Activated naive CD4-positive, alpha-beta T cell treated with anti-CD3 and anti-CD28 coated beads for 36 hours (primary cell): ENCODE measurements at regions of chr9 and their contacts with region 1.

Region 1: GRCh38 chr9:91101611-91102168 is 260.0 kb downstream of the AUH start:
- DNase-seq: peak; percentile 97
- H3K4me3 Mint-ChIP-seq: peak overlapping the region; percentile 59
- H3K27ac Mint-ChIP-seq: peak overlapping the region; percentile 14
- H3K4me1 Mint-ChIP-seq: peaks cover 41% of the 10 kb centered on the region
- H3K27me3 Mint-ChIP-seq: peaks cover 3% of the 10 kb centered on the region

Region 2: DNA sequence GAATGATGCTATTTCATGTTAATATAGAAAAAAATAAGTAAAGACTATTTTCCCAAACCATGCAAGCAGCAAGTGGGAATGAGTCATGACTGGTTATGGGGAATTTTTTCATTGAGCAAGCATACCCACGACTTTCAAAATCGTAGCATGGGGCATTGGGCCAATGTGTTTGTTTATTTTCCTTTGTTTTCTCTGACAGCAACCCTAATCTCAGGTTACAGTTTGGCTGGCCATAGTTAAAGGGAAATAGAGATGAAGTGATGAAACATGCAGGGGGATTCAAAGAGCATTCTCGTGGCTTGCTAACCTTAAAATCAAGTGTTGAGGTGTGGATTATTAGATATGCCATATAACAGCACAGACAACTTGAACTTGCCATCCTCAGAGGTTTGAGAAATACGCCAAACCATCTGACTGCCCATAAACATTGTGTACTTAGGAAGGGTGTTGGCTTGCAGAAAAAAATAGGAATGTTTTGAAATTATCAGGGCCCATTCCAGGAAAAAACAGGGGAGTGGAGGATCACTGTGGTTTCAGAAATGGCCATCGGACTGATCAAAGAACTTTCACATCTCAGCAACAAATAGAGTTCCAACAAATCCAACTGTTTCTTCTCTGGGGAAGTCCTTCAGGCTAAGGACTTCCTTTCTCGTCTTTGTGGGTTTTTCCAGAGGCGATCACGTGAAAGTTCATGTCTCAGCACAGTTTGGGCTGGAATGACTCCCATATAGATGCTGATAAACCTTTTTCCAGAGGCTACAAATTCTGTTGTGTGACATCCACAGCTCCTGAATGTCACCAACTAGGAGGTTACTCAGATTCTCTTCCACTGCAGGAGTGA is 41.0 kb before region 1 on chr9:
- CTCF ChIA-PET with region 1: no interaction called
- intact Hi-C with region 1: loop called (anchors 1 kb)
- DNase-seq: no peak
- H3K4me3 Mint-ChIP-seq: no peak overlapping the region
- H3K27ac Mint-ChIP-seq: no peak overlapping the region
- H3K4me1 Mint-ChIP-seq: peaks cover 29% of the 10 kb centered on the region
- H3K27me3 Mint-ChIP-seq: peaks cover 9% of the 10 kb centered on the region

Region 3: DNA sequence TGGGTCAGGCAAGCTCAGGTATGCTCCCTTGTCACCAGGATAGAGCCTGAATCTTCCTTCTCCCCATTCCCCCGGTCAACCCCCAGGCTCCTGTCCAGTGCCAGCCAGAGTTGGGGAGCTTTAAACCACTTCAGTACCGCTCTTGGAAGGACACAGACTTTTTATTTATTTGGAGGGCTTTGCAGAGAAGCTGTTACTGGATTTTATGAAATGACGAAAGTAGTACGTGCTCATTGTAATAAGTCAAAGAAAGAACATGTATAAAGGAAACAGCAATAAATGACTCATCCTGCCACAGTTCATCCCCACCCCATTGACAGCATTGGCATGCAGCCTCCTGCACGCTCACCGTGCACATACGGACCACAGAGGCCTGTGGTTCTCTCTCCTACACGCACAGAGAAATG is 29.7 kb after region 1 on chr9:
- CTCF ChIA-PET with region 1: no interaction called
- intact Hi-C with region 1: loop called (anchors 1 kb)
- DNase-seq: peak; percentile 86
- H3K4me3 Mint-ChIP-seq: no peak overlapping the region
- H3K27ac Mint-ChIP-seq: peak overlapping the region; percentile 82
- H3K4me1 Mint-ChIP-seq: peaks cover 15% of the 10 kb centered on the region
- H3K27me3 Mint-ChIP-seq: peaks cover 11% of the 10 kb centered on the region

Region 4: DNA sequence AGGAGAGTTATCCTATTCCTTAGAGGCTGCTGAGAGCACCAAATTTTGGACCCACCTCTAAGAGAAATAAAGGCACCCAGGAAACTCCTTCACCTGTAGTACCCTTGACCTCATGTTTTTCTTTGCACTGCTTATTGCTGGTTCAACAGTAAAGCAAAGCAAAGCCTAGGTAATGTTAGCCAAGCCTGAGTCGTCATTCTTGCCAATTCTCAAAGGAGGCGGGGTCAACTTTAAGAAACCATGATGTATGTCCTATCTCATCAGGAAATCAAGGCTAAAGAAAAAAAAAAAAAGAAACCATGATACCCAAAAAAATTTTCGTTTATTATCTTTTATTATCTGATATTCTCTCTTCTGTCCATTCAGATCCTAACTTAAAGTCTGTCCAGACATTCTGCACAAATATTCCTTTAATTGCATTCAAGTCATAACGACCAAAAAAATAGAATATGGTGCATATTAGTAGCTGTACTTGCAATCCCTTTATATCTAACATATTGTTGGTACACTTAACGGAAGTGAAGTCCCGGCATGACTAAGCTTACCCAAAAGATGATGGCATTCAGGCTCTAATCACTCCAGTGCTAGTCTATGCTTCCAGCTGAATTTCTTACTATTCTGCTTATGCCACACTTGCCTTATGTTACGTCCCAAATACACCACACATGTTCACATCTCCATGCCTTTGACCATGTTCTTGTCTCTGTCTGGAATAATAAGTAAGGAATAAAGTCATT is 258.2 kb after region 1 on chr9:
- CTCF ChIA-PET with region 1: no interaction called
- intact Hi-C with region 1: loop called (anchors 1 kb)
- DNase-seq: no peak
- H3K4me3 Mint-ChIP-seq: peak overlapping the region; percentile 91
- H3K27ac Mint-ChIP-seq: peak overlapping the region; percentile 54
- H3K4me1 Mint-ChIP-seq: peaks cover 47% of the 10 kb centered on the region
- H3K27me3 Mint-ChIP-seq: no peaks in the 10 kb centered on the region

Region 5: DNA sequence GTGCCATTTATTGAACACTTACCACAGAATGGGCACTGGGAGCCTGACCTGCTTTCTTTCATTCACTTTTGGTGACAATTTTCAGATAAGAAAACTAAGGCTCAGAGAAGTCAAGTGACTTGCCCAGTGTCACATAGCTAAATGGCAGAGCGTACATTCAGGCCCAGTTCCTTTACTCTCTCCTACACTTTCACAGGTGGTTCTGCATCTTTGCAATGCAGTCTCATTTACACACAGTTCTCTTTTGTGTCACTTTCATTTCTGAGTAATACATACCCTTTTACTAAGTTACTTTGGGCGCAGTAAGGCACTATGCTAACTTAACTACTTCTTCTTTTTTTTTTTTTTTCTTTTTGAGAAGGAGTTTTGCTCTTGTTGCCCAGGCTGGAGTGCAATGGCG is 313.6 kb after region 1 on chr9:
- CTCF ChIA-PET with region 1: no interaction called
- intact Hi-C with region 1: loop called (anchors 2 kb)
- DNase-seq: peak; percentile 56
- H3K4me3 Mint-ChIP-seq: no peak overlapping the region
- H3K27ac Mint-ChIP-seq: peak overlapping the region; percentile 80
- H3K4me1 Mint-ChIP-seq: peaks cover 69% of the 10 kb centered on the region
- H3K27me3 Mint-ChIP-seq: peaks cover 2% of the 10 kb centered on the region

Region 6: DNA sequence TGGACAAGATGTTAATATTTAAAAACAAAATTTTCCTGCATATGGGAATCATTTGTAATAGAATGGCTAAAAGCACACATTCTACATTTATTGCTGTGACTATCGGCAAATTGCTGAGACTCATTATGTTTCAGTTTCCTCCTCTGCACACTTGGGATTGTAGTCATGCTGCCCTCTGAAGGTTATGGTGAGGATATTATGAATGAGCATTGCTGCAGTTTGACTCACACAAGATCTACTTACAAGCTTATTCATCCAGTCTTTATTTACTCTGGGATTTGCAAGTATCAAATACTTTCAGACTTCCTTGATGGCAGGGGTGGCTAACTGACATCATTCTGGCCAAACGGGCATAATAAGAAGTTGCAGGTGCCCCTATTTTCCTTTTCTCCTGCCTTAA is 331.5 kb after region 1 on chr9:
- CTCF ChIA-PET with region 1: no interaction called
- intact Hi-C with region 1: no loop called
- DNase-seq: peak; percentile 34
- H3K4me3 Mint-ChIP-seq: no peak overlapping the region
- H3K27ac Mint-ChIP-seq: no peak overlapping the region
- H3K4me1 Mint-ChIP-seq: peaks cover 3% of the 10 kb centered on the region
- H3K27me3 Mint-ChIP-seq: peaks cover 12% of the 10 kb centered on the region